Heart right ventricle (tissue), 16 donors: ENCODE measurements at regions of chr1 and their contacts with region 1.

Region 1: DNA sequence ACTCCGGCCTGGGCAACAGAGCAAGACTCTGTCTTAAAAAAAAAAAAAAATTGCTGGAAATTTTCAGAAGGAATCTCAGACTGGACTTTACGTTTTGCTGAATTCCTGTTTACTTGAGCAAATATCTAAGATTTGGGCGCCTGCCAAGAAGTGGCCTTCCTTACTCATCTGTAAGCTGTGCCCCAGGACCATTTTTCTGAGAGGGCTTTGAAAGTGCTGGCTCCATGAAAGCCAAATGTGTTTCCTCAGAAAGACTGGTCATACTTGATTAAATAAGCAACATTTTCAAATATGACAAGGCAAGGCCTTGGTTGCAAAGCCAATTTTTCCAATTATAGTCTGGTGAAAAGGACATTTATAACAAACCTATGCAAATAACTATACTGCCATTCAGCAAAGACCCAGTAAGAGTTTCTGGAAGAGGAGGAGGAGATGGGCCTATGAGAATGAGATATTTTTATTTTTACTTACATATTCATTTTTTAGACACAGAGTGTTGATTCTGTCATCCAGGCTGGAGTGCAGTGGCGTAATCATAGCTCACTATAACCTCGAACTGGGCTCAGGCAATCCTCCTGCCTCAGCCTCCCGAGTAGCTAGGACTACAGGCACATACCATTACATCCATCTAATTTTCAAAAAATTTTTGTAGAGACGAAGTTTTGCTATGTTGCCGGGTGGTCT is 56.3 kb upstream of the HTR1D start:
- DNase-seq: no peak
- ATAC-seq: no peak
- H3K4me3 ChIP-seq: no peak overlapping the region
- H3K27ac ChIP-seq: no peak overlapping the region
- H3K4me1 ChIP-seq: no peaks in the 10 kb centered on the region
- H3K27me3 ChIP-seq: peaks cover 0 to 28% (median 11%) of the 10 kb centered on the region in 7 donors
- CTCF ChIP-seq: no peak

Region 2: GRCh38 chr1:22976461-22977243 is 296.9 kb before region 1 on chr1:
- intact Hi-C with region 1: loop called in 3 of 10 experiments (anchors 10 kb)
- DNase-seq: peak; percentile 21 to 50
- ATAC-seq: peak; percentile 89 to 95 (median 92)
- H3K4me3 ChIP-seq: no peak overlapping the region
- H3K27ac ChIP-seq: no peak overlapping the region
- H3K4me1 ChIP-seq: peaks cover 0 to 10% (median 0%) of the 10 kb centered on the region in 9 donors
- H3K27me3 ChIP-seq: peaks cover 0 to 36% (median 7%) of the 10 kb centered on the region in 7 donors
- CTCF ChIP-seq: peak; percentile 30 to 70 (median 65)

Region 3: DNA sequence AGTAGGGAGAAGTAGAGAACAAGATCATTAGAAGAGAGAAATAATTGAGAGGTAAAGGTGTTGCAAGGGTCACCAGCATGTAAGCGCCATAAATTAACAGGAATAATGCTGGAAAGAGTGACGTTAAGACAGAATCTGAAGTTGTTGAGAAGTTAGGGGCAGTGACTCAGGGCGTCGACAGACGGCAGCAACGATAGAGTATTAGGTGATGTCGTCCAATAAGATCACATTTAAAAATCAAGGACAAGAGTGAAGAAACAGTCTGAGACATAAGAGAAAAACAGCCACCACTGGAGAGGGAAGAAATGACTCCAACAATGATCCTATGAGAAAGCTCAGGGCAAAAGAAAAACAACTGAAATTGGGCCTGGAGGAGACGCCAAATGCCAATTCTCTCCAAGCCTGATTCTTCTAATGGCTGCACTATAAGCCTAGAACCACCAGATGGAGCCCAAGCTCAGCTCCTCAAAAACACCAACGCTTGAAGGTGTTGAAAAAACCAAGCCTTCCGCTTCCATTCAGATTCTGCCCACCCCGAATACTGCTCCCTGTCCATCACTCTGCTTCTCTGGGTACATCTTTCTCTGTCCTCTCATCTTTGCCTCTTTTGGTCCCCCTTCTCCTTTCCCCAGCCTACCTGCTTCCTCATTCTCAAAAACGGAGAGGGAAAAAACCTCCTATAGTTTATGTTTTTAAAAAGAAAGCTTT is 175.0 kb before region 1 on chr1:
- intact Hi-C with region 1: loop called in 5 of 10 experiments (anchors 5 to 10 kb)
- DNase-seq: peak in 1 of 2 donors; percentile 65
- ATAC-seq: peak; percentile 57 to 81 (median 68)
- H3K4me3 ChIP-seq: no peak overlapping the region
- H3K27ac ChIP-seq: peak overlapping the region in 1 of 10 donors; percentile 79
- H3K4me1 ChIP-seq: peaks cover 27 to 56% (median 54%) of the 10 kb centered on the region in 9 donors
- H3K27me3 ChIP-seq: no peaks in the 10 kb centered on the region
- CTCF ChIP-seq: peak; percentile 88 to 98 (median 94)

Region 4: DNA sequence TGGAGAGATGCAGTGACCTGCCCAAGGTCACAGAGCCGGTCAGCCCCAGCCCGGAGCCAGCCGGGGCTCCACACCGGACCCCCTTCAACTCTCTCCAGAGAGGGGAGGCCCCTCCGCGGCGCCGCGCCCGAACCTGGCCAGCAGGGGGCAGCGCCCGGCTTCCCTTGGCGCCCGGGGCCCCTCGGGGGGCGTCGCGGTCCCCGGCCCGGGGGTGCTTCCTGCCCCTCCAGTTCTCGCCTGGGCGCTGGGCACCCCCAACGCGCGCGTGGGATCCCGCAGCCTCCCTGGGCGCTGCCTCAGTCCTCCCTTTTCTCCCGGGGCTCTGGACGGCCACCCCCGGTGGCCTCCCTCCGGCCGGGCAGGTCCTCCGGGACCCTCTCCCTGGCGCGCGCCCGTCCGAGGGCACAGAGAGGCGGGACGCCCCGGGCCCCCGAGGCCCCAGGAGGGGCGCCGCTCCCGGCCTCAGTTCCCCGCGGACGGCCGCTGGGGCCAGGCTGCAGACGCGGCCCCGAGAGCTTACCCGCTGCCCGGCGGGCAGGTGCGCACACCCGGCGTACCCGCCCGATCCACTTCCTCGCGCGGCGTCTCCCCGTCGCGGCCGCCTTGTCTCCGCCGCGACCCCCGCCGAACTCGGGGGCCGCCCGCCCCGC is 56.7 kb before region 1 on chr1:
- intact Hi-C with region 1: loop called in 6 of 10 experiments (anchors 5 to 10 kb)
- DNase-seq: peak in 1 of 2 donors; percentile 34
- ATAC-seq: peak in 1 of 8 donors; percentile 45
- H3K4me3 ChIP-seq: peak overlapping the region in 9 of 10 donors; percentile 31 to 58 (median 49)
- H3K27ac ChIP-seq: no peak overlapping the region
- H3K4me1 ChIP-seq: peaks cover 0 to 14% (median 6%) of the 10 kb centered on the region in 9 donors
- H3K27me3 ChIP-seq: peaks cover 20 to 74% (median 56%) of the 10 kb centered on the region in 7 donors
- CTCF ChIP-seq: peak; percentile 38 to 75 (median 69)

Region 5: GRCh38 chr1:23244256-23244761 is 29.3 kb before region 1 on chr1:
- intact Hi-C with region 1: loop called in 1 of 10 experiments (anchors 1 kb)
- DNase-seq: no peak
- ATAC-seq: no peak
- H3K4me3 ChIP-seq: no peak overlapping the region
- H3K27ac ChIP-seq: no peak overlapping the region
- H3K4me1 ChIP-seq: no peaks in the 10 kb centered on the region
- H3K27me3 ChIP-seq: peaks cover 0 to 10% (median 0%) of the 10 kb centered on the region in 7 donors
- CTCF ChIP-seq: no peak